Naive thymus-derived CD4-positive, alpha-beta T cell (primary cell): ENCODE measurements at regions of chr4 and their contacts with region 1.

Region 1: DNA sequence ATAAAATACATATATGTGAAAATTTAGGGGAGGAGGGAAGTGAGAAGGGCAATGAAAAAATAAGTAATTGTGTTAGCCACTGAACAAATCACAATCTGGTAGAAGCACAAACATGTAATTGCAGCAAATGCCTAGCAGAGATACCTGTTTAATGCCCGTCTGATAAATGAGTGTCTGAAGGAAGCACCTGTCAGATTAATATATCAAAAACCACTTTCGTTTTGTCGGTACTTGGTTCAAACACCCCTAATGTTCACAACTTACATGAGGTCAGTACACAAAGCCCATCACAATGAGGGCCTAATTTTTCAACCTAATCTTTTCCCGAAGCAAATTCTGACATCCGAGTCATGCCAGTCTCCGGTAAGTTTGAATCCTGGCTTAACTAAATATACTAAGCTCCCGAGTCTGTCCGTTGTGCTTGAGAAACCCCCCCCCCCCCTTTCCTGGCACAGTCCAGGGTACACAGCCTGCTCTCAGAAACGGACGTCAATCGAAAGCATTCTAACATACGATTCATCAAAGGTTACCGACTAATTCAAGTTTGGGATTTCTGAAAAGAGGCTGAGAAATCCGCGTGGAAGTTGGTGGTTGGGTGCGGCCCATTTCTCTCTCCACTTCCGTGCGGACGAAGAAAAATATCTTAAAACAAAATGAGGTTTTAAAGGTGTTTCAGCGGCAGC is 758 bp downstream of the SDAD1 start:
- DNase-seq: peak in 4 of 9 donors; percentile 2 to 7 (median 4)
- ATAC-seq: no peak
- H3K4me3 ChIP-seq: peak overlapping the region; percentile 86
- H3K4me3 Mint-ChIP-seq: peak overlapping the region; percentile 87 to 98 (median 96)
- H3K27ac ChIP-seq: peak overlapping the region; percentile 86
- H3K27ac Mint-ChIP-seq: peak overlapping the region; percentile 85 to 97 (median 93)
- H3K4me1 ChIP-seq: peaks cover 13 to 39% of the 10 kb centered on the region in 2 donors
- H3K4me1 Mint-ChIP-seq: peaks cover 24 to 38% (median 30%) of the 10 kb centered on the region in 7 donors
- H3K27me3 ChIP-seq: no peaks in the 10 kb centered on the region
- H3K27me3 Mint-ChIP-seq: peaks cover 0 to 8% (median 2%) of the 10 kb centered on the region in 5 donors

Region 2: DNA sequence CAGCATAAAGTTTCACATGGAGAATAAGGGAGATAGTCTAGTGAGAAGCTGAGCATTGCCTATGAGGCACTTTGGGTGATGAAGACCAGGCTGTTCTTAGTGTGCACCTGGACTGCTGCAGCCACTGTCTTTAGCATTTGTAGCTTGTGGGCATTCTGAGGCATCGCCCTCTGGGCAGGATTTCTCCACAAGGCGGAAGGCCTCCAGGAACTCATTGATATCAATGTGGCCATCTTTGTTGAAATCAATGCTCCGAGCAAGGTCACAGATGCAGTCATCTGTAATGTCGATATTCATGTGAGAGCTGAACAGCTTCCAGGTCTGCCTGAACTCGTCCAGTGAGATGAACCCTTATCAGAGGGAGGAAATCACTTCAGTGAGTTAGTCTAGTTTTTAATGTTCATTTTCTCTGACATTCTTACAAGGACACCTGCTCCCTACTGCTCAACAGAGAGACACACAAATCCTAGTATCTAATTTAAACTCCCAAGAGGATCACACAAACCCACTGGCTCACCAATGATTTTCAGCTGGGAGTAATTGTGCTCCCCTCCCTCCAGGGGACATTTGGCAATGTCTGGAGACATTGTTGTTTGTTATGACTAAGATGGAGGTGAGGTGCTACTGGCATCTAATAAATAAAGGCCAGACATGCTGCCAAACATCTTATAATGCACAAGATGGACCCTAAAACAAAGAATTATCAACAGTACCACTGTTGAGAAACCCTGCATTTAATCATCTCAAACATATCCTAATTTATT is 129.2 kb before region 1 on chr4:
- CTCF ChIA-PET with region 1: no interaction called
- POLR2A ChIA-PET with region 1: no interaction called
- intact Hi-C with region 1: no loop called
- DNase-seq: no peak
- ATAC-seq: no peak
- H3K4me3 ChIP-seq: no peak overlapping the region
- H3K4me3 Mint-ChIP-seq: no peak overlapping the region
- H3K27ac ChIP-seq: no peak overlapping the region
- H3K27ac Mint-ChIP-seq: no peak overlapping the region
- H3K4me1 ChIP-seq: no peaks in the 10 kb centered on the region
- H3K4me1 Mint-ChIP-seq: no peaks in the 10 kb centered on the region
- H3K27me3 ChIP-seq: no peaks in the 10 kb centered on the region
- H3K27me3 Mint-ChIP-seq: peaks cover 0 to 9% (median 2%) of the 10 kb centered on the region in 5 donors

Region 3: DNA sequence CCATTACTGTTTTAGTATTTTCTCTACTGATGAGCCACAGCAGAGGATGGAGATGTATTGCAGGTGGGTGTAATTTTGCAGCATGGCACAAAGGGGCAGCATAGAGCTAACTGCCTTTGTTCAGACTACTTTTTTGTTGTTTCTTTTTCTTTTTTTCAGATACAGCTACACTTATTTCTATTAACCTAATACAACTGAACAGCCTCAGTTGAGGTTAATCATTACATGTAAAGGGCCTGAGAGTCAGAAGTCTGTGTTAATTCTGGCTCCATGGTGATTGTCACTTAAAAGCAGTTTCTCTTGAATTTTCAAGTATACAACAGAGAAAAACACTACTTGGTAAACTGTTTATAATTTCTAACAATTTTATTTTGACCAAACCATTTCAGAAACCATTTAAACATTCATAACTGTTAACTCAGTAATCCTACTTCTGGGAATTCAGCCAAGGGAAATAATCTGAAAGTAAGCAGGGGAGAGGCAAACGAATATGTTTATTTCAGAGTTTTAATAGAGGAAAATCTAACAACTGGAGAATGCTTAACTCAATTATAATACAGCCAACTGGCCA is 73.8 kb before region 1 on chr4:
- CTCF ChIA-PET with region 1: no interaction called
- POLR2A ChIA-PET with region 1: no interaction called
- intact Hi-C with region 1: loop called (anchors 1 to 5 kb)
- DNase-seq: peak in 7 of 9 donors; percentile 17 to 65 (median 26)
- ATAC-seq: peak; percentile 88
- H3K4me3 ChIP-seq: no peak overlapping the region
- H3K4me3 Mint-ChIP-seq: no peak overlapping the region
- H3K27ac ChIP-seq: no peak overlapping the region
- H3K27ac Mint-ChIP-seq: peak overlapping the region in 3 of 9 donors; percentile 24 to 45 (median 42)
- H3K4me1 ChIP-seq: no peaks in the 10 kb centered on the region
- H3K4me1 Mint-ChIP-seq: peaks cover 0 to 4% (median 0%) of the 10 kb centered on the region in 7 donors
- H3K27me3 ChIP-seq: no peaks in the 10 kb centered on the region
- H3K27me3 Mint-ChIP-seq: no peaks in the 10 kb centered on the region

Region 4: GRCh38 chr4:76148142-76148865 is 158.3 kb after region 1 on chr4 and contains the start of gene NUP54:
- CTCF ChIA-PET with region 1: no interaction called
- POLR2A ChIA-PET with region 1: interaction called, 8 read pairs
- intact Hi-C with region 1: loop called (anchors 1 kb)
- DNase-seq: peak; percentile 85 to 96 (median 92)
- ATAC-seq: peak; percentile 99
- H3K4me3 ChIP-seq: peak within 1 kb of the TSS; percentile 85
- H3K4me3 Mint-ChIP-seq: peak within 1 kb of the TSS; percentile 90 to 100 (median 96)
- H3K27ac ChIP-seq: peak within 1 kb of the TSS; percentile 93
- H3K27ac Mint-ChIP-seq: peak within 1 kb of the TSS; percentile 91 to 99 (median 94)
- H3K4me1 ChIP-seq: peaks cover 12% of the 10 kb centered on the region in 2 donors
- H3K4me1 Mint-ChIP-seq: peaks cover 21 to 52% (median 45%) of the 10 kb centered on the region in 7 donors
- H3K27me3 ChIP-seq: no peaks in the 10 kb centered on the region
- H3K27me3 Mint-ChIP-seq: no peaks in the 10 kb centered on the region
- total RNA-seq, gene NUP54: 51.1 to 82.0 (median 65.5) TPM